ENCODE measurements at regions of chr1 and their contacts with region 1.

Region 1: DNA sequence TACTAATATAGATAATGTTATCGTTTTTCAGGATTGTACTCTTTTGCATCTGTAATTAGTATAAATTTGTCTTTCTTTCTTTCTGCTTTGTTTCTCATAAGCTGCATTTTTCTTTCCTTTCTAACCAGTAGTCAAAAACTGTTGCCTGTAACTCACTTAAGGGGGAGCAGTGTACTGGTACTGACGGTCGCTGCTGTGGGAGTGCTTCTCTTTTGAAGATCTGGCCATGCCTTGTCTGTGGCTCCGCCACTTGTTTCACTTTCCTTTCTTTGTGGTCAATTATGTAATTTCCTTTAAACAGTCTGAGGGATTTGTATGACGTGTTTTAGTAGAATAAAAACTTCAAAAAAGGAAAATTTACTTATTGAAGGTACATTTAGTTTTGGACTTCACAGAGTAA is 37.0 kb downstream of the MIA3 start:
- DNase-seq: peak in 34 of 35 experiments; percentile 50 to 92 (median 74)
- ATAC-seq: peak; percentile 98 to 100 (median 99)
- H3K4me3 ChIP-seq: no peak overlapping the region
- H3K4me3 Mint-ChIP-seq: peak overlapping the region; percentile 13 to 58 (median 46)
- H3K27ac ChIP-seq: peak overlapping the region; percentile 93
- H3K27ac Mint-ChIP-seq: peak overlapping the region; percentile 87 to 90
- H3K4me1 ChIP-seq: peaks cover 20 to 23% of the 10 kb centered on the region in 2 experiments
- H3K4me1 Mint-ChIP-seq: peaks cover 61 to 64% (median 62%) of the 10 kb centered on the region in 3 donors
- H3K27me3 ChIP-seq: no peaks in the 10 kb centered on the region
- H3K27me3 Mint-ChIP-seq: no peaks in the 10 kb centered on the region

Region 2: GRCh38 chr1:222570837-222571236 is 84.0 kb before region 1 on chr1:
- CTCF ChIA-PET with region 1: no interaction called
- POLR2A ChIA-PET with region 1: no interaction called
- DNase-seq: no peak
- ATAC-seq: no peak
- H3K4me3 ChIP-seq: no peak overlapping the region
- H3K4me3 Mint-ChIP-seq: no peak overlapping the region
- H3K27ac ChIP-seq: no peak overlapping the region
- H3K27ac Mint-ChIP-seq: no peak overlapping the region
- H3K4me1 ChIP-seq: no peaks in the 10 kb centered on the region
- H3K4me1 Mint-ChIP-seq: peaks cover 5 to 8% (median 7%) of the 10 kb centered on the region in 3 donors
- H3K27me3 ChIP-seq: no peaks in the 10 kb centered on the region
- H3K27me3 Mint-ChIP-seq: no peaks in the 10 kb centered on the region

Region 3: DNA sequence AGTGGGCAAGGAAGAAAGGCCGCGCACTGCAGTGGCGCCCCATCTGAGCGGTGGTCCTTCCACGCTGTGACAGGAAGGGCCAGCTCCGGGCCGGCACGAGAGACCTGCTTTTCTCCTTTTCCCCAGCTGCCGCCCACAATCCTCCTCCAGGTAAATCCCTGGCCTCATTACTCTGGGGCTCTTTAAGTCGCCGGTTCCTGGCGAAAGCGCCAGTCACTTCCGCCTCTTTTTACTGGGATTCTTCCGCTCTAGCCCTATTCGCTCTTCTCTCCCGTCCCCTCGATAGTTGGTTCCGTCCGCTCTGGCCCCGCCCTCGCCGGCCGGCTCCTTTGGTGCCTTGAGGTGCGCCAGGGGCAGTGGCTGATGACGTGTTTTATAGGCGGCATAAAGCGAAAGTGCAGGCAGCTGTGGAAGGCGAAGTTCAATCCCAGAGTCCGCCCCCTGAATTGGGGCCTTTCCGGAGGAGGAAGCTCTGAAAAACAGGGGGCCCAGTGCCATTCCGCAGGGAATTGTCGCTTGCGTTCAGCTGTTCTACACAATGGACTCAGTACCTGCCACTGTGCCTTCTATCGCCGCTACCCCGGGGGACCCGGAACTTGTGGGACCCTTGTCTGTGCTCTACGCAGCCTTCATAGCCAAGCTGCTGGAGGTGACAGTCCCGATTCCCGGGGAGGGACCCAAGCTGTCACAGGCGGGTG is 10.8 kb before region 1 on chr1:
- CTCF ChIA-PET with region 1: interaction called, 4 to 20 read pairs
- POLR2A ChIA-PET with region 1: interaction called, 7 to 16 read pairs
- DNase-seq: peak; percentile 91 to 99 (median 98)
- ATAC-seq: peak; percentile 91 to 98 (median 97)
- H3K4me3 ChIP-seq: peak overlapping the region; percentile 98 to 100
- H3K4me3 Mint-ChIP-seq: peak overlapping the region; percentile 96 to 98 (median 96)
- H3K27ac ChIP-seq: peak overlapping the region; percentile 95
- H3K27ac Mint-ChIP-seq: peak overlapping the region; percentile 94 to 96
- H3K4me1 ChIP-seq: peaks cover 11 to 15% of the 10 kb centered on the region in 2 experiments
- H3K4me1 Mint-ChIP-seq: peaks cover 41 to 47% (median 44%) of the 10 kb centered on the region in 3 donors
- H3K27me3 ChIP-seq: no peaks in the 10 kb centered on the region
- H3K27me3 Mint-ChIP-seq: no peaks in the 10 kb centered on the region

Region 4: GRCh38 chr1:222713091-222713961 is 58.5 kb after region 1 on chr1:
- CTCF ChIA-PET with region 1: interaction called in 1 of 2 experiments, 15 read pairs
- POLR2A ChIA-PET with region 1: interaction called in 1 of 2 experiments, 4 read pairs
- DNase-seq: peak; percentile 84 to 98 (median 93)
- ATAC-seq: peak; percentile 74 to 81 (median 74)
- H3K4me3 ChIP-seq: peak overlapping the region; percentile 89 to 100
- H3K4me3 Mint-ChIP-seq: peak overlapping the region; percentile 93 to 99 (median 96)
- H3K27ac ChIP-seq: peak overlapping the region; percentile 99
- H3K27ac Mint-ChIP-seq: peak overlapping the region; percentile 99 to 100
- H3K4me1 ChIP-seq: peaks cover 11 to 18% of the 10 kb centered on the region in 2 experiments
- H3K4me1 Mint-ChIP-seq: peaks cover 60 to 67% (median 62%) of the 10 kb centered on the region in 3 donors
- H3K27me3 ChIP-seq: no peaks in the 10 kb centered on the region
- H3K27me3 Mint-ChIP-seq: no peaks in the 10 kb centered on the region